ENCODE measurements at regions of chr20 and their contacts with region 1.

Region 1: GRCh38 chr20:32052090-32052777 is at the start of gene HCK:
- DNase-seq: no peak
- H3K4me3 ChIP-seq: peak within 1 kb of the TSS in 3 of 4 donors; percentile 31 to 46 (median 31)
- H3K27ac ChIP-seq: peak within 1 kb of the TSS; percentile 59 to 72 (median 66)
- H3K4me1 ChIP-seq: peaks cover 0 to 14% (median 9%) of the 10 kb centered on the region in 4 donors
- H3K27me3 ChIP-seq: peaks cover 20 to 70% (median 49%) of the 10 kb centered on the region in 3 donors
- CTCF ChIP-seq: no peak
- EP300 ChIP-seq: no peak
- POLR2A ChIP-seq: no peak
- total RNA-seq, gene HCK: 8.6 to 28.0 (median 10.7) TPM

Region 2: GRCh38 chr20:31990641-31991338 is 61.4 kb before region 1 on chr20:
- intact Hi-C with region 1: loop called (anchors 10 kb)
- DNase-seq: no peak
- H3K4me3 ChIP-seq: no peak overlapping the region
- H3K27ac ChIP-seq: no peak overlapping the region
- H3K4me1 ChIP-seq: no peaks in the 10 kb centered on the region
- H3K27me3 ChIP-seq: peaks cover 0 to 23% (median 10%) of the 10 kb centered on the region in 3 donors
- CTCF ChIP-seq: no peak
- EP300 ChIP-seq: no peak
- POLR2A ChIP-seq: no peak

Measured in sigmoid colon (tissue), 7 donors.